ENCODE measurements at regions of chr5 and their contacts with region 1.

Region 1: GRCh38 chr5:119031905-119032304 is 39.0 kb upstream of the DMXL1 start:
- DNase-seq: peak; percentile 42
- H3K4me3 Mint-ChIP-seq: no peak overlapping the region
- H3K27ac Mint-ChIP-seq: peak overlapping the region; percentile 89
- H3K4me1 Mint-ChIP-seq: peaks cover 46% of the 10 kb centered on the region
- H3K27me3 Mint-ChIP-seq: no peaks in the 10 kb centered on the region

Region 2: GRCh38 chr5:118968925-118969375 is 63.0 kb before region 1 on chr5:
- CTCF ChIA-PET with region 1: no interaction called
- intact Hi-C with region 1: no loop called
- DNase-seq: no peak
- H3K4me3 Mint-ChIP-seq: no peak overlapping the region
- H3K27ac Mint-ChIP-seq: no peak overlapping the region
- H3K4me1 Mint-ChIP-seq: peaks cover 6% of the 10 kb centered on the region
- H3K27me3 Mint-ChIP-seq: no peaks in the 10 kb centered on the region

Region 3: DNA sequence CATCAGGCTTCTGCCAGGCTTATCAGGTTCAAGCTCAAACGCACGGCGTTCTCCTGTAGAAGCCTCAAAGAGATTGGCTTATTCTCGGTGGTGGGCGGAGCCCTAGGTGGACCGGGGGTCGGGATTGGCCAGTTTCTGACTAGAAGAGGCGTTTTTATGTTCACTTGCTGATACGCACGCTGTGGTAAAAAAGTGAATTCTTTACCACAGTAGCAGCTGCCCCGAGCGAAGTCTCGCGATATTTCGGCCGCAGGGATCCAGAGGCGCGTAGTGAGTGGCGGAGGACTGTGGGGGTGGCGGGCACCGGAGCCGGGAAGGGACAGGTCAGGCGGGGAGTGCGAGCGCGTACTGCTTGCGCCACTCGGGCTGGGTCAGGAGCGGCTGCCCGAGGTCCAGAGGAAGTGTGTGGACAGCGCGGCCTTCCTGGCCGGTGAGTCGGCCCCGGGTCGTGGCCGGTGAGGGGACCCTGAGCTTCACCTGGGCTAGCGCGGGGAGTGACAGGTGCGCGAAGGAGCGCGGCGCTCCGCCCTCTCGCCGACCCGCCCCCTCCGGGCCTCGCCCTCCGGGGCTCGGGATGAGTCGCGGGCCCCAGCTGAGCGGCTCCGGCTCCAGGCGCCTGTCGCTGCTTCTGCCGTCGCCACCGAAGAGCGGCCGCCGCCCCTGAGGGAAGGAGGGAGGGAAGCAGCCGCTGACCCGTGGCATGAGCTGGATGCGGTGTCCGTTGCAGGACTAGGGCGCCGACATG is 39.1 kb after region 1 on chr5 and contains the start of gene DMXL1:
- CTCF ChIA-PET with region 1: no interaction called
- intact Hi-C with region 1: loop called (anchors 1 kb)
- DNase-seq: peak; percentile 100
- H3K4me3 Mint-ChIP-seq: peak within 1 kb of the TSS; percentile 95
- H3K27ac Mint-ChIP-seq: peak within 1 kb of the TSS; percentile 97
- H3K4me1 Mint-ChIP-seq: peaks cover 38% of the 10 kb centered on the region
- H3K27me3 Mint-ChIP-seq: peaks cover 2% of the 10 kb centered on the region
- total RNA-seq, gene DMXL1: 16.4 to 18.0 TPM

Region 4: GRCh38 chr5:119238265-119239118 is 206.6 kb after region 1 on chr5:
- CTCF ChIA-PET with region 1: no interaction called
- intact Hi-C with region 1: loop called (anchors 1 kb)
- DNase-seq: no peak
- H3K4me3 Mint-ChIP-seq: peak overlapping the region; percentile 43
- H3K27ac Mint-ChIP-seq: peak overlapping the region; percentile 54
- H3K4me1 Mint-ChIP-seq: peaks cover 32% of the 10 kb centered on the region
- H3K27me3 Mint-ChIP-seq: no peaks in the 10 kb centered on the region

Region 5: DNA sequence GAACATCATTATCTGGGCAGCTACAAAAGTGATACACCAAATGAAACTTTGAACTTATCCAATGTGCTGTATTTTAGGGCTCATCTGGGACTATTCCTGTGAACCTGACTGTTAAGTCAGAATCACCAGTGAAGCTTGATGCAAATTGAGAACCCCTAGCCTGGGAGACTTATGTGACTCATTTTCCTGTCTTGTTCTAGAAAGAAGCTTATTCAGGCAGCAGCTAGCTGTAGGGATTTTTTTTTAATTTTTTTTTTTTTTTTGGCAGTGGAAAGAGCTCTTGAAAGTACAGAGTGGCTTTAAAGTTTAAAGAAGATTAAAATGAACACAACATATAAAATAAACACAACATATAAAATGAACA is 242.8 kb after region 1 on chr5:
- CTCF ChIA-PET with region 1: no interaction called
- intact Hi-C with region 1: loop called (anchors 1 kb)
- DNase-seq: peak; percentile 50
- H3K4me3 Mint-ChIP-seq: peak overlapping the region; percentile 72
- H3K27ac Mint-ChIP-seq: peak overlapping the region; percentile 97
- H3K4me1 Mint-ChIP-seq: peaks cover 88% of the 10 kb centered on the region
- H3K27me3 Mint-ChIP-seq: no peaks in the 10 kb centered on the region

Region 6: DNA sequence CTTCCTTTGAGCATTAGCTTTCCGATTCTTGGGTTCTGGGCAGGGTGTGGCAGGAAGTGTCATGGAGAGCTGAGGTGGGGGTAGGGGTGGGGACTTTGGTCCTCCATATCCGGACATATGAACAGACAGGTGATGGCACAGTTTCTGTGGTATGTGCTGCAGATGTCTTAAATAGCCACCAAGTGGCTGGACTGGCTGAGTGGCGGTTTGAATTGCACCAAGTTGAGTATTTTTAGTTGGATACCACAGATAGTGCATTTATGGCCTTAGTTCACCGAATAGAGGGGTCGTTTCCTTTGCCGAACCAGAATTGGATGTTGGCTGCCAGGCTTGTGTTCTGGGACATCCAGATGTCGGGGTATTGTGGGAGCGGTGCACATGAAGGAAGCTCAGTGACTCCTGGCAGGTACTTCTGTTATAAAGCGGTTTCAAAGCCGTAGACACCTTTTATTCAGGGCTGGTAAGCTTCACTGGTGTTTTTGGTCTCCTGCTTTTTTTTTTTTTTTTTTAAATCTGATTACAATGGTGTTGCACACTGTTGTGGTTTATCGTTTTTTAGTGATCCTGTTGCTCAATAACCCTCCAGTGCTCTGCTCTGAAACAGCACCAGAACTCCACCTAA is 308.8 kb after region 1 on chr5:
- CTCF ChIA-PET with region 1: no interaction called
- intact Hi-C with region 1: loop called (anchors 1 kb)
- DNase-seq: peak; percentile 68
- H3K4me3 Mint-ChIP-seq: peak overlapping the region; percentile 69
- H3K27ac Mint-ChIP-seq: peak overlapping the region; percentile 96
- H3K4me1 Mint-ChIP-seq: peaks cover 93% of the 10 kb centered on the region
- H3K27me3 Mint-ChIP-seq: no peaks in the 10 kb centered on the region

Measured in activated naive CD4-positive, alpha-beta T cell treated with anti-CD3 and anti-CD28 coated beads for 36 hours (primary cell).